ENCODE measurements at regions of chr3 and their contacts with region 1.

Region 1: GRCh38 chr3:66276705-66277274 is 56.0 kb downstream of the SLC25A26 start:
- DNase-seq: peak in 4 of 10 donors; percentile 36 to 65 (median 60)

Region 2: DNA sequence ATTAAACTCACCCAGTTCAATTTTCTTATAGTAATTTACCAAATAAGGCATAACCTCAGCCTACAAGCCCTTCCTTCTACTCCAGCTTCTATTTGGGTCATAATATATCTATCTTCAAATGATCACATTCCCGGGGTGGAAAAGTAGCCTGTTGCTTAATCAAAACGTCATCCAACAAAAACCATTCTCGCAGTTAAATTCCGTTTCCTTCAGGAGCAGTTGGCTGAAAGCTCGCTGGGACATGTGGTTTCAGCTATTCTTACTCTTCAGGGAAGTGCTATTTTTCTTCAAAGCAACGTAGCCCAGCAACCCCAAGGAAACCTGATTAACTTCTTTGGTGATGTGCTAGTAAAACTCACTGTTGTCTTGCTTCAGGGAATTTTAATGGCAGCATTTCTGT is 297.6 kb before region 1 on chr3:
- intact Hi-C with region 1: no loop called
- DNase-seq: peak in 1 of 10 donors; percentile 12

Region 3: DNA sequence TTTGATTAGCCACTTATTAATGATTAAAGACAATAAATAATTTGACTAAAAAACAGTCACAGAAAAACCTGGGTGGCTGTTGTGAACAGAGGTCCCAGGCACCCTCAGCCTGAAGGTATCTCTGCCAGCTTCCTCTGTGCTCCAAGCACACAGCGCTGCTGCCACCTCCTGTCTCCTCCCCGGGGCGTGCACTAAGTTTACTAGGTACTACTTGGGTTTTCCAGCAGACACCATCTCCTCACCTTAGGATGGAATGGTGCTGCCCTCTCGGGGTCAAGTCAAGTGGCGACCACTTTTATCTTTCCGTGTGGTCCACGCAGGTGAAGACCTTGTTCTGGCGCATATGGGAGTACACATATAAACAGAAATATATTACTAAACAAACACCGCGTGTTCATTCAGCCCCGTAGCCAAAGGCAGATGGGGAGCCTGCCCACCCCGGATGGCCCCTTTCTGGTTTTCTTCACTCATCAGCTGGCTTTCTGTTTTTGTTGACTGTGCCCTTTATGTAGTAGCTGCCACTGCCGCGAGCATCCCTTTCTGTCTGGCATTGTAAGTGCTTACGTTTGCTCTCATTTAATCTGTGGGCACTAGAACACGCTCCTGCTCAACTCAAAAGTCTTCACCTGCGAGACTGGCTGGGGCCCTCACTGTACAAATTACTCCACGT is 96.0 kb after region 1 on chr3:
- intact Hi-C with region 1: loop called (anchors 2 kb)
- DNase-seq: peak in 5 of 10 donors; percentile 36 to 92 (median 46)

Region 4: GRCh38 chr3:66816090-66816761 is 539.4 kb after region 1 on chr3:
- intact Hi-C with region 1: loop called (anchors 2 kb)
- DNase-seq: no peak

Region 5: DNA sequence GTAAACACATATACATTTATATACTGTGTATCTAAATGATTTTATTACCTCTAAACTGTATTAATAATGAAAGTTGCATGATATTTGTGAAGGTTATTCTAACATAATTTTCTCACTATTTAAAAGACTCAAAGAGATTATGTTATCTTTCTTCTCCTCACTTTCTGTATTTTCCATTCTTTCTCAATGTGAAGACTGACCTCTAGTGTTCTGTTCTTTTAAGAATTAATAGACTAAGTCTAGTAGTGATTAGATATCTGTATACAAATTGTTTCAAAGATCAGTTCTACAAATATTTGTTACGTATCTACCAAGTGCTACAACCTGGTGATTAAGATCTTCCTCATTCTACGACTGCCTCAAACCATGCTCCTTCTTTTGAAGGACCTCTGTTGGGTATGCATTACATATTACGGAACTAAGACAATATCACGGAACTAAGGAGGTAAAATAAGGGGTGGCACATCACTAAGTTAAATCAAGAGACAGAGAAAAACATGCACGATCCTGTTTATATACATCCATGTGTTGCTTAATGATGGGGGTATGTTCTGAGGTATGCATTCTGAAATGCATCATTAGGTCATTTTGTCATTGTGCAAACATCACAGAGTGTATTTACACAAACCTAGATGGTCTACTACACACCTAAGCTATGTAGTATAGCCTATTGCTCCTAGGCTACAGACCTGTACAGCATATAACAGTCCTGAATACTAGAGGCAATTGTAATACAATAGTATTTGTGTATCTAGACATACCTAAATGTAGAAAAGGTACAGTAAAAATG is 559.8 kb after region 1 on chr3:
- intact Hi-C with region 1: loop called (anchors 5 kb)
- DNase-seq: no peak

Measured in posterior cingulate gyrus (tissue), 11 donors.